ENCODE measurements at regions of chr2 and their contacts with region 1.

Region 1: DNA sequence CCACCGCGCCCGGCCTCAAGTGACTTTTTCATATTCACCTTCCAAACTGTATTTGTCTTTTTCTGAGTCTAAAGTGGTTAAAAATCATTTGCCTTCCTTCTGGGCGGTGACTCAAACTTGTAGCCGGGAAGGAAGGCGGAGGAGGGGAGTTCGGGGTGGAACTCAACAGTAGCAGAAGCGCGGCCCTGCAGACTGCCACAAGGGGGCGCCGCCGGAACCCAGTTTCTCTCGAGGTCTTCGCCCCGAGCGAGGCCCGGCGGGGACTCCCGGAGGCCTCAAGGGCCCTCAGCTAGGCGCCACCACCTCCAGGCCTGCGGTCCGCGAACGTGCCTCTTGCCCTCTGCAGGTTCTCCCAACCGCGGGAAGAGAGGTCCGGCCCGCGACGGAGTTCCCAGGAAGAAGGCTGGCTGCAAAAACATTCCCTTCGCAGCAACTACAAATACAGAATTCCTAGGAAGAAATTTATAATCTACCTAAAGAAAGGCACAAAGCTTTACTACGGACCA is 16.8 kb upstream of the ITM2C start:
- DNase-seq: peak; percentile 44
- ATAC-seq: peak; percentile 100
- H3K4me3 ChIP-seq: no peak overlapping the region; the same call in 1 of the 2 replicates
- H3K27ac ChIP-seq: no peak overlapping the region
- H3K4me1 ChIP-seq: peaks cover 5% of the 10 kb centered on the region; the same call in 1 of the 2 replicates
- H3K27me3 ChIP-seq: peaks cover 0 to 3% of the 10 kb centered on the region in 2 experiments; a peak in 1 of 4 replicates
- CTCF ChIP-seq: peak; percentile 84 to 96 (median 91)
- EP300 ChIP-seq: no peak
- POLR2A ChIP-seq: no peak
- RAD21 ChIP-seq: peak; percentile 69

Region 2: DNA sequence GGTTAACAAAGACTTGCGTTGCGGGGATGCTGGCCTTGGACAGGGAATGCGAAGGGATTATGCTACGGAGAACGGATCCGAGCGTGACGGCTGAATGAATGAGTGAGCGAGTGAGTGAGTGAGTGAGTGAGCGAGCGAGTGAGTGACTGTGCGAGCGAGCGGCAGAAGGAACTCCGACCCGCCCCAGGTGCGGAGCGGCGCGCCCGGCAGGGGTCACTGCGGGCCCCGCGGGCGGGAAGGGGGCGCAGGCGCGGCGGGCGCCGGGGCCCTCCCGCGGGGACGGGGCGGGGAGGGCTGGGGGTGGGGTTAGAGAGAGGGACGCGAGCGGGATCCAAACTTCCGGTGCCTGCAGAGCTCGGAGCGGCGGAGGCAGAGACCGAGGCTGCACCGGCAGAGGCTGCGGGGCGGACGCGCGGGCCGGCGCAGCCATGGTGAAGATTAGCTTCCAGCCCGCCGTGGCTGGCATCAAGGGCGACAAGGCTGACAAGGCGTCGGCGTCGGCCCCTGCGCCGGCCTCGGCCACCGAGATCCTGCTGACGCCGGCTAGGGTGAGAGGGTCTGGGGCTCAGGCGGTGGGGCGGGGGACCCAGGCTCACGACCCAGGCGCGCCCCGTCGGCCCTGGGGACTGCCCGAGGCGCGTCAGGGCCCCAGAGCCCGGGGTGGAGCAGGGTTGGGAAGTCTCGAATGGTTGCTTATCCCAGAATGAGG is 16.8 kb after region 1 on chr2 and contains the start of gene ITM2C:
- CTCF ChIA-PET with region 1: interaction called, 25 read pairs
- POLR2A ChIA-PET with region 1: interaction called, 4 read pairs
- RAD21 ChIA-PET with region 1: interaction called, 4 read pairs
- SMC1A ChIA-PET with region 1: interaction called, 3 read pairs
- in situ Hi-C with region 1: no loop called
- intact Hi-C with region 1: no loop called
- DNase-seq: no peak
- ATAC-seq: peak; percentile 84
- H3K4me3 ChIP-seq: peak within 1 kb of the TSS; percentile 97
- H3K27ac ChIP-seq: peak within 1 kb of the TSS; percentile 38
- H3K4me1 ChIP-seq: peaks cover 18% of the 10 kb centered on the region
- H3K27me3 ChIP-seq: no peaks in the 10 kb centered on the region; a peak in 2 of 4 replicates
- CTCF ChIP-seq: peak; percentile 50 to 52 (median 52); a peak in 5 of 6 replicates
- EP300 ChIP-seq: no peak
- POLR2A ChIP-seq: peak; percentile 87
- RAD21 ChIP-seq: peak; percentile 48
- polyA plus RNA-seq, gene ITM2C: 5.4 to 16.9 TPM

Region 3: DNA sequence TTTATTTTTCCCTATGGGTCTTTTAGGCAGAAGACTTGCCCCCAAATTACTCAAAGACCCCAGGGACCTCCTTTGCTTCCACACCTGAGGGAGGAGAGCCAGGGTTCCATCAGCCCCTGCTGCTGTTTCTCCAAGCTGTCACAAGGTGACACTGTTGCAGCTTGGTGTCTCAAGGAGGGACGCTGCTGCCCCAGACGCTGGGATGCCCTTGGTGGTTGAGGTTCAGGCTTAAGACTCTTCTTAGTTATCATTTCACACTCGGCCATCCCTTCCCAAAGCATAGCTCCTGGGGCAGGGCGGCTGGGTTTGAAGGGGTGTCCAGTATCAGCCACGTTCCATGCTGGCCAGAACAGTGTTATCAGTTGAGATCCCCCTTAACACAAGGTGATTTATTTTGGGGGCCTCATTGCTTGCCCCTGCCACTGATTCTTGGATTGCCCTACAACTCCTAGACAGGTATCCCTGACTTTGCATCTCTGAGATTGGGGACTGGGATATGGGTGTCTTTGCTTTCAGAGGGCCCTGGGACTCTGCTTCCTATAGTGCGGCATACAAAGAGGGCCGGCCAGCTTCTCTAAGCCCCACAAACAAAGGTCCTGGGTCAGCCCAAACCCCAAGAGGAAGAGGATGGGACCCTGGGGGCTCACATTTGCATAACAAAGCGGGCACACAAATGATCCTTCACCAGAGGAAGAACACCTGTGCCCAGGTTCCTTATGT is 54.4 kb after region 1 on chr2:
- CTCF ChIA-PET with region 1: interaction called, 32 read pairs
- POLR2A ChIA-PET with region 1: no interaction called
- RAD21 ChIA-PET with region 1: no interaction called
- SMC1A ChIA-PET with region 1: interaction called, 4 read pairs
- in situ Hi-C with region 1: no loop called
- intact Hi-C with region 1: no loop called
- DNase-seq: no peak
- ATAC-seq: peak; percentile 94
- H3K4me3 ChIP-seq: no peak overlapping the region
- H3K27ac ChIP-seq: no peak overlapping the region
- H3K4me1 ChIP-seq: peaks cover 14% of the 10 kb centered on the region
- H3K27me3 ChIP-seq: no peaks in the 10 kb centered on the region
- CTCF ChIP-seq: peak; percentile 98 to 99 (median 98); a peak in 5 of 6 replicates
- EP300 ChIP-seq: no peak
- POLR2A ChIP-seq: no peak
- RAD21 ChIP-seq: peak; percentile 99

Region 4: GRCh38 chr2:230942920-230943896 is 95.3 kb after region 1 on chr2:
- CTCF ChIA-PET with region 1: interaction called, 10 read pairs
- POLR2A ChIA-PET with region 1: no interaction called
- RAD21 ChIA-PET with region 1: no interaction called
- SMC1A ChIA-PET with region 1: no interaction called
- in situ Hi-C with region 1: no loop called
- intact Hi-C with region 1: no loop called
- DNase-seq: peak; percentile 82
- ATAC-seq: peak; percentile 79
- H3K4me3 ChIP-seq: peak overlapping the region; percentile 85
- H3K27ac ChIP-seq: peak overlapping the region; percentile 99
- H3K4me1 ChIP-seq: peaks cover 27% of the 10 kb centered on the region
- H3K27me3 ChIP-seq: no peaks in the 10 kb centered on the region
- CTCF ChIP-seq: no peak
- EP300 ChIP-seq: no peak
- POLR2A ChIP-seq: peak; percentile 78
- RAD21 ChIP-seq: no peak

Region 5: DNA sequence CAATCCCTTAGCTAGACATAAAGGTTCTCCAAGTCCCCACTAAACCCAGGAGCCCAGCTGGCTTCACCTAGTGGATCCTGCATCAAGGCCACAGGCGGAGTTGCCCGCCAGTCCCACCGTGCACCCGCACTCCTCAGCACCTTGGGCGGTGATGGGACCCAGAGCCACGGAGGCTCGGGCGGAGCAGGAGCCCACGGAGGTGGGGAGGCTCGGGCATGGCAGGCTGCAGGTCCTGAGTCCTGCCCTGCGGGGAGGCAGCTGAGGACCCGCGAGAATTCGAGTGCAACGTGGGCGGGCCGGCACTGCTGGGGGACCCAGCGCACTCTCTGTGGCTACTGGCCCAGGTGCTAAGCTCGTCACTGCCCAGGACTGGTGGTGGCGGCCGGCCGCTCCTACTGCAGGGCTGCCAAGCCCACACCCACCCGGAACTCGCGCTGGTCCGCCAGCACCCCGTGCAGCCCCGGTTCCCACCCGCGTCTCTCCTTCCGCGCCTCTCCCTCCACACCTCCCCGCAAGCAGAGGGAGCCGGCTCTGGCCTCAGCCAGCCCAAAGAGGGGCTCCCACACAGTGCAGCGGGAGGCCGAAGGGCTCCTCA is 116.3 kb after region 1 on chr2:
- CTCF ChIA-PET with region 1: no interaction called
- POLR2A ChIA-PET with region 1: no interaction called
- RAD21 ChIA-PET with region 1: no interaction called
- SMC1A ChIA-PET with region 1: no interaction called
- in situ Hi-C with region 1: no loop called
- intact Hi-C with region 1: no loop called
- DNase-seq: no peak
- ATAC-seq: no peak
- H3K4me3 ChIP-seq: no peak overlapping the region
- H3K27ac ChIP-seq: no peak overlapping the region
- H3K4me1 ChIP-seq: 0 out of 2 replicates have a peak, but pooled peaks cover 3% of the 10 kb centered on the region
- H3K27me3 ChIP-seq: no peaks in the 10 kb centered on the region
- CTCF ChIP-seq: no peak
- EP300 ChIP-seq: no peak
- POLR2A ChIP-seq: no peak
- RAD21 ChIP-seq: no peak